ENCODE measurements at regions of chr3 and their contacts with region 1.

Region 1: GRCh38 chr3:17103579-17103978 is 218.8 kb downstream of the PLCL2 start:
- DNase-seq: no peak
- ATAC-seq: no peak
- H3K4me3 ChIP-seq: no peak overlapping the region
- H3K4me3 Mint-ChIP-seq: no peak overlapping the region
- H3K27ac ChIP-seq: no peak overlapping the region
- H3K27ac Mint-ChIP-seq: no peak overlapping the region
- H3K4me1 ChIP-seq: no peaks in the 10 kb centered on the region
- H3K4me1 Mint-ChIP-seq: no peaks in the 10 kb centered on the region
- H3K27me3 ChIP-seq: peaks cover 0 to 2% (median 0%) of the 10 kb centered on the region in 4 experiments
- H3K27me3 Mint-ChIP-seq: no peaks in the 10 kb centered on the region
- CTCF ChIP-seq: no peak

Region 2: GRCh38 chr3:17349093-17349492 is 245.5 kb after region 1 on chr3:
- CTCF ChIA-PET with region 1: no interaction called
- POLR2A ChIA-PET with region 1: no interaction called
- intact Hi-C with region 1: no loop called
- DNase-seq: no peak
- ATAC-seq: no peak
- H3K4me3 ChIP-seq: no peak overlapping the region
- H3K4me3 Mint-ChIP-seq: no peak overlapping the region
- H3K27ac ChIP-seq: no peak overlapping the region
- H3K27ac Mint-ChIP-seq: no peak overlapping the region
- H3K4me1 ChIP-seq: no peaks in the 10 kb centered on the region
- H3K4me1 Mint-ChIP-seq: peaks cover 2% of the 10 kb centered on the region
- H3K27me3 ChIP-seq: no peaks in the 10 kb centered on the region
- H3K27me3 Mint-ChIP-seq: no peaks in the 10 kb centered on the region
- CTCF ChIP-seq: no peak

Region 3: GRCh38 chr3:17782751-17783150 is 679.2 kb after region 1 on chr3:
- CTCF ChIA-PET with region 1: no interaction called
- POLR2A ChIA-PET with region 1: no interaction called
- intact Hi-C with region 1: loop called (anchors 5 kb)
- DNase-seq: peak; percentile 24
- ATAC-seq: no peak
- H3K4me3 ChIP-seq: no peak overlapping the region
- H3K4me3 Mint-ChIP-seq: no peak overlapping the region
- H3K27ac ChIP-seq: peak overlapping the region in 1 of 2 donors; percentile 5
- H3K27ac Mint-ChIP-seq: peak overlapping the region; percentile 24
- H3K4me1 ChIP-seq: peaks cover 8 to 10% of the 10 kb centered on the region in 2 donors
- H3K4me1 Mint-ChIP-seq: peaks cover 32% of the 10 kb centered on the region
- H3K27me3 ChIP-seq: no peaks in the 10 kb centered on the region
- H3K27me3 Mint-ChIP-seq: no peaks in the 10 kb centered on the region
- CTCF ChIP-seq: no peak

Measured in B cell (primary cell).